ENCODE measurements at regions of chr1 and their contacts with region 1.

Region 1: GRCh38 chr1:18913065-18913835 is 10.9 kb upstream of the ALDH4A1 start:
- DNase-seq: no peak
- H3K4me3 ChIP-seq: no peak overlapping the region
- H3K27me3 ChIP-seq: no peaks in the 10 kb centered on the region
- CTCF ChIP-seq: peak; percentile 100

Region 2: GRCh38 chr1:18902523-18903290 is 10.5 kb before region 1 on chr1 and contains the start of gene ALDH4A1:
- CTCF ChIA-PET with region 1: interaction called, 18 read pairs
- POLR2A ChIA-PET with region 1: interaction called, 4 read pairs
- DNase-seq: peak; percentile 93
- H3K4me3 ChIP-seq: peak within 1 kb of the TSS; percentile 58
- H3K27me3 ChIP-seq: no peaks in the 10 kb centered on the region
- CTCF ChIP-seq: no peak
- polyA plus RNA-seq, gene ALDH4A1: 18.1 and 36.6 TPM in 2 replicates

Region 3: DNA sequence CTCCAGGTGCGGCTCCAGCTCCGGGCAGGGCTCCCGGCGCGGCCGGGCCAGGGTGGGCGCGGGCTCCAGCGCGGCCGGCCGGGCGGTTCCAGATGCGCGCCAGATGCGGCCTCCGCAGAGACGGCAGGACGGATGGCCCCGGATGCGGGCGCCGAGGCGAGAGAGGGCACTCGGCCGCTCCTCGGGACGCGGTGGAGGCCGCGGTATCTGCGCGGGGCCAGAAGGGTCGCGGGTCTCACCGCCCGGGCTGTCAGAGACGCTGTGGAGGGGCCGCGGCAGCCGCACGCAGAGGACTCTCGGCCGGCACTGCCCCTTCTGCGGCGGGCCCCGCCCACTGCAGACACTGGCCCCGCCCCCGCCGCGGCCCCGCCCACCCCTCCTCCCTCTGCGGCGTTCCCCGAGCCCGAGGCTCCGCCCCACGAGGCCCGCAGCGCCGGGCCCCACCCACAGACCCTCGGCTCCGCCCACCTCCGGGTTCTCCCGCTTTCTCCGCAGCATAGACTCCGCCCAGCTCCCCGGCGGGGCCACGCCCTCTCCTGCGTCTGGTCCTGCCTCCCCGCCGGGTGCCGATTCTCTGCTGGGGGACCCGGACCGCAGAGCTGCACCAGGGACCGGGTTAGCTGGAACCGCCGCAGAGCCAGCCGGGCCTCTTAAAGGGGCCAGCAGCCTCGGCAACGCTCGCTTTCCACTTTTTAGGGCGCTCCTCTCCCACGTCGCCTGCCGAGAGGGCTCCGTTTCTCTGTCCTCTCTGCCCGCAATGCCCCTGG is 43.3 kb after region 1 on chr1 and contains the start of gene IFFO2:
- CTCF ChIA-PET with region 1: interaction called, 57 read pairs
- POLR2A ChIA-PET with region 1: no interaction called
- DNase-seq: peak; percentile 50
- H3K4me3 ChIP-seq: peak within 1 kb of the TSS; percentile 88
- H3K27me3 ChIP-seq: 0 out of 2 replicates have a peak, but pooled peaks cover 2% of the 10 kb centered on the region
- CTCF ChIP-seq: no peak
- polyA plus RNA-seq, gene IFFO2: 11.1 and 15.0 TPM in 2 replicates

Region 4: GRCh38 chr1:19010995-19011844 is 98.0 kb after region 1 on chr1:
- CTCF ChIA-PET with region 1: interaction called, 11 read pairs
- POLR2A ChIA-PET with region 1: no interaction called
- DNase-seq: peak; percentile 97
- H3K4me3 ChIP-seq: no peak overlapping the region
- H3K27me3 ChIP-seq: no peaks in the 10 kb centered on the region
- CTCF ChIP-seq: no peak

Region 5: GRCh38 chr1:19032701-19033515 is 119.7 kb after region 1 on chr1:
- CTCF ChIA-PET with region 1: no interaction called
- POLR2A ChIA-PET with region 1: no interaction called
- DNase-seq: no peak
- H3K4me3 ChIP-seq: no peak overlapping the region
- H3K27me3 ChIP-seq: peaks cover 3% of the 10 kb centered on the region; the same call in 1 of the 2 replicates
- CTCF ChIP-seq: no peak

Region 6: GRCh38 chr1:19096036-19096833 is 183.0 kb after region 1 on chr1:
- CTCF ChIA-PET with region 1: interaction called, 38 read pairs
- POLR2A ChIA-PET with region 1: no interaction called
- DNase-seq: no peak
- H3K4me3 ChIP-seq: no peak overlapping the region
- H3K27me3 ChIP-seq: no peaks in the 10 kb centered on the region
- CTCF ChIP-seq: peak; percentile 46

Measured in BJ (cell line).